CD14-positive monocyte (primary cell): ENCODE measurements at regions of chr5 and their contacts with region 1.

Region 1: GRCh38 chr5:78964887-78965286 is 20.2 kb downstream of the ARSB start:
- DNase-seq: peak in 2 of 3 donors; percentile 21 to 24
- H3K4me3 ChIP-seq: no peak overlapping the region
- H3K4me3 Mint-ChIP-seq: no peak overlapping the region
- H3K27ac ChIP-seq: no peak overlapping the region
- H3K27ac Mint-ChIP-seq: no peak overlapping the region
- H3K4me1 ChIP-seq: no peaks in the 10 kb centered on the region
- H3K4me1 Mint-ChIP-seq: no peaks in the 10 kb centered on the region
- H3K27me3 ChIP-seq: no peaks in the 10 kb centered on the region
- H3K27me3 Mint-ChIP-seq: peaks cover 0 to 1% (median 0%) of the 10 kb centered on the region in 3 donors
- CTCF ChIP-seq: no peak

Region 2: DNA sequence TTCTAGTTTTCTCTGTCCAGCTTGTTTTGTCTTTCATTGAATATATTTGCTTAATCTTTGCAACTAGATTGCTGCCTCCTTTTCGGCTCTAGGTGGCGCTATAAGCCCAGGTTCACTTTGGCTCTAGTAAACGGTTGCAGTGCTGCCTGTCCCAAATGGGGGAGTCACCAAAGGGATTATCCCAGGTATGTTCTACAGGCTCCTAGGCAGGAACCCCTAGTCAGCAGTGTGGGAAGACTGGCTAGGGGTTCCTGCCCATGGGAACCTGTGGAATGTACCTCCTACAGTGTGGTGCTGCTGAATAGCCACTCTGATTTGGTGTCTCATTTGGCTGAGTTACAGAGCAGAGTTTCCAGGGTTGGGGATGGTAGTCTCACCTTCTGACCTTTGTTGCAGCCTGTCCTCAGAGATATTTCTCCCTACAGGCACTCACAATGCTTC is 64.9 kb before region 1 on chr5:
- intact Hi-C with region 1: loop called in 1 of 2 experiments (anchors 10 kb)
- DNase-seq: peak; percentile 21 to 48 (median 36)
- H3K4me3 ChIP-seq: no peak overlapping the region
- H3K4me3 Mint-ChIP-seq: no peak overlapping the region
- H3K27ac ChIP-seq: no peak overlapping the region
- H3K27ac Mint-ChIP-seq: peak overlapping the region in 1 of 7 donors; percentile 36
- H3K4me1 ChIP-seq: no peaks in the 10 kb centered on the region
- H3K4me1 Mint-ChIP-seq: peaks cover 10% of the 10 kb centered on the region
- H3K27me3 ChIP-seq: no peaks in the 10 kb centered on the region
- H3K27me3 Mint-ChIP-seq: no peaks in the 10 kb centered on the region
- CTCF ChIP-seq: peak; percentile 78

Region 3: DNA sequence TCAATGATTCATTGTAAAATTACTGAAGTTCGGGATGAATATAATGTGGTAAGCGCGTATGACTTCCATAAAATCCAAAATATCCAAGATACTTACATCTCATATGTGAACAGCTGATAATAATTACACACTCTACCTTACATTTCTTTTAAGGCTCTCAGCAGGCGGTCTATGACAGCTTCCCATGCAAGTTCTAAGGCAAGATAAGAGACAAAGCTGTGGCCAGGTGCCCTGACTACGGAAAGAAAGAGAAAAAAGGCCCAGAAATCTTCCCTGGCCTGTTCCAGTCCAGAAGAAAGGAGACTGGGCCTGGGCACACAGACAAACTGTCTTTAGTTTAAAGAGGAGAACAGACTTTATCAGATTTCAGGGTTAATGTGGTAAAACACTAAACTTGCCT is 48.8 kb before region 1 on chr5:
- intact Hi-C with region 1: no loop called
- DNase-seq: no peak
- H3K4me3 ChIP-seq: no peak overlapping the region
- H3K4me3 Mint-ChIP-seq: no peak overlapping the region
- H3K27ac ChIP-seq: no peak overlapping the region
- H3K27ac Mint-ChIP-seq: peak overlapping the region in 1 of 7 donors; percentile 16
- H3K4me1 ChIP-seq: no peaks in the 10 kb centered on the region
- H3K4me1 Mint-ChIP-seq: no peaks in the 10 kb centered on the region
- H3K27me3 ChIP-seq: no peaks in the 10 kb centered on the region
- H3K27me3 Mint-ChIP-seq: peaks cover 0 to 2% (median 0%) of the 10 kb centered on the region in 3 donors
- CTCF ChIP-seq: no peak

Region 4: DNA sequence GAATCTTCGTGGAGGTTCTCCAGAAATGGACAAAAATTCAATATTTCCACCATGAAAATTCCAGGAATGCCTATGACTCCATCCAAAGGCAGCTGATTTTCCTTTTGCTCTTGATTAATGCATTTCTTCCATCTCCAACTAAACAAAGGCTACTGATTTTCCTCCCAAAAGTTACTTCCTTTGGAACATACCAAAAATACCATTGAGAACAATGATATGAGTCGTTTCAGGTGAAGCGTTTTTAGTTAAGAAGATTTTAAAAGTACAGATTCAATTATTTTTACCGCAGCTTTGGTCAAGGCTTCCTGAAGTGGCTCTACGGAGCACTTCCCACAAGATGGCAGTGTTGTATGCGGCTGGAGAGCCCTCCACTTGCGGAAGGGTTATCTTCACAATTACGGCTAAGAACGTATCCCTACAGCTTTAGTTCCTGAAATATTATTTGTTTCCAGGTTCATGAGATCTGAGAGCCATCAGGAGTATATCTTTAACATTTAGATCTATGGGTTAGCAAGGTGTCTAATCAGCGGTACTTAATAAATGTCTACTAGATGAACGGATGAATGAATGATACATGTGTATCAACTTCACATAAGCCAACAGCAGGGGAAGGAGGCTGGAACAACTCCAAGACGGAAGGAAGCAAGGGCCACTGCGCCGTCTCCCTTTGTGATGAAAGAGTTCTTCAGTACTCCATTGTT is 56.1 kb after region 1 on chr5:
- intact Hi-C with region 1: no loop called
- DNase-seq: peak; percentile 38 to 50 (median 42)
- H3K4me3 ChIP-seq: no peak overlapping the region
- H3K4me3 Mint-ChIP-seq: peak overlapping the region; percentile 25 to 59
- H3K27ac ChIP-seq: no peak overlapping the region
- H3K27ac Mint-ChIP-seq: peak overlapping the region in 1 of 7 donors; percentile 46
- H3K4me1 ChIP-seq: peaks cover 0 to 3% of the 10 kb centered on the region in 2 donors
- H3K4me1 Mint-ChIP-seq: peaks cover 16% of the 10 kb centered on the region
- H3K27me3 ChIP-seq: peaks cover 10 to 15% of the 10 kb centered on the region in 2 donors
- H3K27me3 Mint-ChIP-seq: peaks cover 7 to 27% (median 7%) of the 10 kb centered on the region in 3 donors
- CTCF ChIP-seq: peak; percentile 74